Left ventricle myocardium inferior (tissue), 1 donor: ENCODE measurements at regions of chr18 and their contacts with region 1.

Region 1: GRCh38 chr18:59402432-59403090 is 43.5 kb upstream of the LMAN1 start:
- DNase-seq: peak; percentile 58
- H3K4me3 ChIP-seq: no peak overlapping the region
- H3K27ac ChIP-seq: no peak overlapping the region
- H3K4me1 ChIP-seq: no peaks in the 10 kb centered on the region
- H3K27me3 ChIP-seq: no peaks in the 10 kb centered on the region
- CTCF ChIP-seq: peak; percentile 96

Region 2: GRCh38 chr18:59249205-59249774 is 153.3 kb before region 1 on chr18:
- intact Hi-C with region 1: loop called (anchors 5 kb)
- DNase-seq: no peak
- H3K4me3 ChIP-seq: no peak overlapping the region
- H3K27ac ChIP-seq: no peak overlapping the region
- H3K4me1 ChIP-seq: no peaks in the 10 kb centered on the region
- H3K27me3 ChIP-seq: peaks cover 77% of the 10 kb centered on the region
- CTCF ChIP-seq: peak; percentile 76

Region 3: DNA sequence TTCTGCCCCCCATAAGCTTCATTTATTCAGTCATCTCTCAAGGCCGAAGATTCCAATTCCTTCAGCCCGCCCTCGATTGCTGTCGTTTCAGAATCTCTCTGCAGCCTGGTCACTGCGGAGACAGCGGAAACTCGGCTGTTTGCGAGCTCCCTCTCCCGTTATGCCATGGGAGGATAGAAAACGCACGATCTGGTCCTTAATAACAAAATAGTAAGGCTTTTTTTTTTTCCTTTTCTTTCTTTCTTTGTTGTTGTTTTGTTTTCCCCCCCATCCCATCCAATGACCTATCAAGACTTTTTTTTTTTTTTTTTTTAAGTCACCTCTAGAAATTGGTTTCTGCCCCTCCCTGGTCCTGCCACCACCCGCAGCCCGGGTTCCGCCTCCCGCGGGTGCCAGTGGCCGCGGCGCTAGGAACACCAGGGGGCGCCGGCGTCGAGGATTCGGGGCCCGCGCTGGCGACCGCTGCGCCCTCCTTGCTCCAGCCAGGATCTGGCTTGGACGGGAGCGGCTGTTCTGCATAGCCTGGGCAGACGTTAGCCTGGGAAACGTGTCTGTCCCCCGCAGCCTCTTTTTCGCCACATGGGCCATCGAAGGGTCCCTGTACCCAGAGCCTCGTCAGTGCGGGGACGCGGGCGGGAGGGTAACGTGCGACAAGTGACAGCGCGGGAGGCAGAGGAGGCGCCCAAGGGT is 94.2 kb before region 1 on chr18:
- intact Hi-C with region 1: loop called (anchors 2 kb)
- DNase-seq: peak; percentile 77
- H3K4me3 ChIP-seq: peak overlapping the region; percentile 58
- H3K27ac ChIP-seq: no peak overlapping the region
- H3K4me1 ChIP-seq: peaks cover 13% of the 10 kb centered on the region
- H3K27me3 ChIP-seq: peaks cover 91% of the 10 kb centered on the region
- CTCF ChIP-seq: peak; percentile 85

Region 4: GRCh38 chr18:59705145-59705544 is 302.6 kb after region 1 on chr18:
- intact Hi-C with region 1: no loop called
- DNase-seq: no peak
- H3K4me3 ChIP-seq: no peak overlapping the region
- H3K27ac ChIP-seq: no peak overlapping the region
- H3K4me1 ChIP-seq: no peaks in the 10 kb centered on the region
- H3K27me3 ChIP-seq: peaks cover 32% of the 10 kb centered on the region
- CTCF ChIP-seq: no peak

Region 5: GRCh38 chr18:59715966-59716369 is 313.4 kb after region 1 on chr18:
- intact Hi-C with region 1: no loop called
- DNase-seq: no peak
- H3K4me3 ChIP-seq: no peak overlapping the region
- H3K27ac ChIP-seq: no peak overlapping the region
- H3K4me1 ChIP-seq: no peaks in the 10 kb centered on the region
- H3K27me3 ChIP-seq: peaks cover 36% of the 10 kb centered on the region
- CTCF ChIP-seq: no peak